ENCODE measurements at regions of chr1 and their contacts with region 1.

Region 1: DNA sequence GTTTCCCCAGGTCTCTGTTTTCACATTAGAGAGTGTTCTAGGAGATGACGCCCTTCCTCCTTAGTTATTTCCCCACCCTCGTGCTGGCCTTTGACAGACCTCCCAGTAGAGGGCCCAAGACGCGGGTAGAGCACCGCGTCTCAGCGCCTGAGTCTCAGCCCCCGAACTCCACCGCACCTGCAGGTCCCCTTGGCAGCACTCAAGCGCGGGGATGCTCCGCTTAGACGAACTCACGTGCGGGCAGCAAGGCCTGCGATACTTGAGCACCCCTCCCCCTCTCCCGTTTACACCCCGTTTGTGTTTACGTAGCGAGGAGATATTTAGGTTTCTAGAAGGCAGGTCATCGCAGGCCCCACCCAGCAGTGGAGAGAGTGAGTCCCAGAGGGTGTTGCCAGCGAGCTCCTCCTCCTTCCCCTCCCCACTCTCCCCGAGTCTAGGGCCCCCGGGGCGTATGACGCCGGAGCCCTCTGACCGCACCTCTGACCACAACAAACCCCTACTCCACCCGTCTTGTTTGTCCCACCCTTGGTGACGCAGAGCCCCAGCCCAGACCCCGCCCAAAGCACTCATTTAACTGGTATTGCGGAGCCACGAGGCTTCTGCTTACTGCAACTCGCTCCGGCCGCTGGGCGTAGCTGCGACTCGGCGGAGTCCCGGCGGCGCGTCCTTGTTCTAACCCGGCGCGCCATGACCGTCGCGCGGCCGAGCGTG is at the start of gene CD55:
- DNase-seq: peak; percentile 100
- H3K4me3 Mint-ChIP-seq: peak within 1 kb of the TSS; percentile 71
- H3K27ac Mint-ChIP-seq: peak within 1 kb of the TSS; percentile 93
- H3K4me1 Mint-ChIP-seq: peaks cover 41% of the 10 kb centered on the region
- H3K27me3 Mint-ChIP-seq: no peaks in the 10 kb centered on the region
- CTCF ChIP-seq: peak; percentile 22
- total RNA-seq, gene CD55: 159 and 213 TPM in 2 replicates

Region 2: DNA sequence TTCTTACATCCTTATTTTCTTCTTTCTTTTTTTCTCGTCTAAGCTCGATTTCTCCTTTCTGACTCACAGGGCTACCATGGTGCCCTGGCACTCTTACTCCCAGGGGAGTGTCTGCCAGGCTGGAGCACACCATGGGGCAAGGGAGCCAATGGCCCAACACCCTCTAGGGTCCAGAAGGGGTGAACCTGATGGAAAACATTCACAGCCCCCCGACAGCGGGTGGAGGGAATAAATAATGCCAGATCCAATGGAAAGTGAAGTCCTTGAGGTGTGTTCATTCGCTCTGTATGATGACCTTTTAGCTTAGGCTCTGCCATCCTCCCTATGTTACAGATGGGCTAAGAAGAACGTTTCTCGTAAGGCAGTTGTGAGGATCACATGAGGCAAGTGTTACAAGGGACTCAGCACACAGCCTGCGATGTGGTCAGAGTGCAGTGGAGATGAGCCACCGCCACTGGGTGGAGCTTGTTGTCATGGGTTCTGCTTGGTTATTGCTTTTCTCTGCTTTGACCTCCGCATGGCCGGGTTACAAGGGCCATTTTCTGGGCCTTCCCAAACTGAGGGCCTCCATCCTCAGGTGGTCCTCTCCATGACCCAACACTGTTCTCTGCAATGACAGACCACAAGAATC is 396.0 kb before region 1 on chr1:
- CTCF ChIA-PET with region 1: no interaction called
- POLR2A ChIA-PET with region 1: no interaction called
- intact Hi-C with region 1: no loop called
- DNase-seq: no peak
- H3K4me3 Mint-ChIP-seq: no peak overlapping the region
- H3K27ac Mint-ChIP-seq: no peak overlapping the region
- H3K4me1 Mint-ChIP-seq: no peaks in the 10 kb centered on the region
- H3K27me3 Mint-ChIP-seq: no peaks in the 10 kb centered on the region
- CTCF ChIP-seq: no peak

Region 3: DNA sequence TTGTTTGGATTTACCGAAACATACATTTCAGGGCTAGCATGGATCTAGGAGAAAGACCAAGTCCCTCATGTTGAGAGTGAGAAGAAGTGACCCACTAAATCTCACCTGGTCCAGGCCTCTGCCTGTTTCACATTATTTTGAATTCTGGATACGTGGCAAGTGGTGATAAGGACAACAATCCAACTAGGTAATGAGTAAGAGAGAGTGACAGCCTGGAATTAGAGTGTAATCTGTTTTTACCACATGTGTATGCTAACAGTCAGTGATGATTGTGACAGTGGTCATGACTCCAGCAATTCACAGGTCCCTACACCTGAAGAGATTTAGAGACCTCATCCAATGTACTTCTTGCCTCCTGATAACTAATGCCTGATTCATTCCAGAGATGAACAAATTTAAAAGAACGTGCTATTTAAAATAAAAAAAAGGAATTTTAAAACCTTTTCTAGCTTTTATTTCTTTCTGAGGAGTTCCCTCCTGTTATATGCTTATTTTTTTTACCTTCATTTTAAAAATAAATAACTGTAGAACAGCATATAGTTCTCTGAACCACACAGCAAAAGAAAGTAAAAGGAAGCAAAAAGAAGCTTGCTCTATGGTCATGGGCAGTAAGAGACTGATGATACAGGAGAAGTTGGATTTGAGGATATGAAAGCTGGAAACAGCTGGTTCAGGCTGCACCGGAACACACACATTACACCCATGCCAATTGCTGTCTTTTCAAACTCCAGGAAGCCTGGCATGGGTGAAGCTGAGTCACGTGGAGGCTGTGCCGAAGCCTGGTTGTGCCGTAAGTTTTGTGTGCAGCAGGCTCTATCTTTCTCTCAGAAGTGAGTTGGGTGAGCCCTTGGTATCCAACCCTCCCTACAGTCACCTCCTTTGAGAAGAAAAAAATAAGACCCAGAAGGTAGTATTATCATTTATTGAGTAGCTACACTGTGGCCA is 303.3 kb before region 1 on chr1:
- CTCF ChIA-PET with region 1: no interaction called
- POLR2A ChIA-PET with region 1: interaction called, 10 read pairs
- intact Hi-C with region 1: no loop called
- DNase-seq: peak; percentile 89
- H3K4me3 Mint-ChIP-seq: no peak overlapping the region
- H3K27ac Mint-ChIP-seq: peak overlapping the region; percentile 60
- H3K4me1 Mint-ChIP-seq: peaks cover 49% of the 10 kb centered on the region
- H3K27me3 Mint-ChIP-seq: no peaks in the 10 kb centered on the region
- CTCF ChIP-seq: no peak

Region 4: DNA sequence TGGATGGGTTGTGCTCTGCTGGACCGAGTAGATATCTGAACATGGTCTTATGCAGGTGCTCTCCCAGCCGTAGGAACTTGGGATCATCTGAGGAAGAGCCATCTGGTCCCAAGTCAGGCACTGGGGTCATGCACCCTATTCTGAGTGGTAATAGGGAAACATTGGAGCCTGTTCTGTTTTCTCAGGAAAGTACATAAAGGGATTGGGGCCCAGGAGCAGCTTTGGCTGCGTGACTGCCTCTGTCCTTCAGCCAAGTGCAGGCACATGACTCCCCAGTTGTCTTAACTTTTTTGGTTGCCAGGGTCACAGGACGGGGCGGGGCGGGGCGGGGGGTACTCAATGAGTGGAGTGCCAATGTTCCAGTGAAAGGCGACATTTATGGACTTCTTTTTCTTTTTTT is 256.7 kb before region 1 on chr1:
- CTCF ChIA-PET with region 1: no interaction called
- POLR2A ChIA-PET with region 1: no interaction called
- intact Hi-C with region 1: no loop called
- DNase-seq: no peak
- H3K4me3 Mint-ChIP-seq: no peak overlapping the region
- H3K27ac Mint-ChIP-seq: no peak overlapping the region
- H3K4me1 Mint-ChIP-seq: no peaks in the 10 kb centered on the region
- H3K27me3 Mint-ChIP-seq: no peaks in the 10 kb centered on the region
- CTCF ChIP-seq: no peak

Region 5: GRCh38 chr1:207077470-207078377 is 243.5 kb before region 1 on chr1:
- CTCF ChIA-PET with region 1: no interaction called
- POLR2A ChIA-PET with region 1: interaction called, 22 read pairs
- intact Hi-C with region 1: loop called (anchors 2 kb)
- DNase-seq: peak; percentile 96
- H3K4me3 Mint-ChIP-seq: no peak overlapping the region
- H3K27ac Mint-ChIP-seq: no peak overlapping the region
- H3K4me1 Mint-ChIP-seq: peaks cover 23% of the 10 kb centered on the region
- H3K27me3 Mint-ChIP-seq: peaks cover 7% of the 10 kb centered on the region
- CTCF ChIP-seq: peak; percentile 99

Region 6: DNA sequence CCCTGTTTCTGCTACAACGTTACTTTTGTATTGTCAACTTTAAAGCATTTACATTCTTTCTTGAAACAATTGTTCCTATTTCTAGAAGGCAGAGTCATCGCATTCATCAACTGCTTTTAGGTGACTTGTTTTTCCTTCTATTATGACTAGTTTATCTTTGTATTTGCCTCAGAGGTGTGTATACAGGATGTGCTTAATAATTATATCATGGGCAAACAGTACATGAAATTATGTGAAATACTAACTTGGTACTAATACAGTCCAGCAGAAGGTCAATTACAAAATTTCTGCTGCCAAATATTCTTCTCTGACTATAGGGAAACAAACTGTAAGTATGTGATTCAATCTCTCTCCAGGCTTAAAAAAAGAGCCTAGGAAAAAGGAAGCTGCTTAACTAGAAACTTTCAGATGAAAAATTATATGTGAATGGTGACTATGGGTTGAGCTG is 115.6 kb before region 1 on chr1:
- CTCF ChIA-PET with region 1: no interaction called
- POLR2A ChIA-PET with region 1: interaction called, 20 read pairs
- intact Hi-C with region 1: loop called (anchors 1 kb)
- DNase-seq: no peak
- H3K4me3 Mint-ChIP-seq: no peak overlapping the region
- H3K27ac Mint-ChIP-seq: peak overlapping the region; percentile 78
- H3K4me1 Mint-ChIP-seq: peaks cover 11% of the 10 kb centered on the region
- H3K27me3 Mint-ChIP-seq: no peaks in the 10 kb centered on the region
- CTCF ChIP-seq: no peak

Region 7: DNA sequence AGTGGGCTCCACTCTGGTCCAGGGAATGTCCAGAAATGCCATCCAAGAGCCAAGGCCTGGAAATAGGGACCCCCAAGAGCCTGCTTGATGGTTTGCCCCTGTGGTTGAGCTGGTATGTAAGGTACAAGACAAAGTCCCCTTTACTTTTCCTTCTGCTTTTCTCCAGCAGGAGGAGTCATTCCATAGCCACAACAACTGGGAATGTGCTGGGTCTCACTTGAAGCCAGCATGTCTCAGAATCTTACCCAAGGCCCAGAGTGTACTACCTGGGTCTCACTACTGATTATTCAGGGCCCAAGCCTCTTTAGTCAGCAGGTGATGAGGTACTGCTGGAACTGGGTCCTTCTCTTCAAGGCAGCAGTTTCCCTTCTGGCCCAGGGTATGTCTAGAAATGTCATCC is 61.8 kb before region 1 on chr1:
- CTCF ChIA-PET with region 1: interaction called, 3 read pairs
- POLR2A ChIA-PET with region 1: interaction called, 12 read pairs
- intact Hi-C with region 1: loop called (anchors 1 kb)
- DNase-seq: peak; percentile 77
- H3K4me3 Mint-ChIP-seq: no peak overlapping the region
- H3K27ac Mint-ChIP-seq: no peak overlapping the region
- H3K4me1 Mint-ChIP-seq: no peaks in the 10 kb centered on the region
- H3K27me3 Mint-ChIP-seq: no peaks in the 10 kb centered on the region
- CTCF ChIP-seq: peak; percentile 71

Region 8: GRCh38 chr1:207355060-207355459 is 33.8 kb after region 1 on chr1:
- CTCF ChIA-PET with region 1: interaction called, 3 read pairs
- POLR2A ChIA-PET with region 1: interaction called, 29 read pairs
- intact Hi-C with region 1: no loop called
- DNase-seq: no peak
- H3K4me3 Mint-ChIP-seq: no peak overlapping the region
- H3K27ac Mint-ChIP-seq: no peak overlapping the region
- H3K4me1 Mint-ChIP-seq: peaks cover 24% of the 10 kb centered on the region
- H3K27me3 Mint-ChIP-seq: no peaks in the 10 kb centered on the region
- CTCF ChIP-seq: no peak

Region 9: DNA sequence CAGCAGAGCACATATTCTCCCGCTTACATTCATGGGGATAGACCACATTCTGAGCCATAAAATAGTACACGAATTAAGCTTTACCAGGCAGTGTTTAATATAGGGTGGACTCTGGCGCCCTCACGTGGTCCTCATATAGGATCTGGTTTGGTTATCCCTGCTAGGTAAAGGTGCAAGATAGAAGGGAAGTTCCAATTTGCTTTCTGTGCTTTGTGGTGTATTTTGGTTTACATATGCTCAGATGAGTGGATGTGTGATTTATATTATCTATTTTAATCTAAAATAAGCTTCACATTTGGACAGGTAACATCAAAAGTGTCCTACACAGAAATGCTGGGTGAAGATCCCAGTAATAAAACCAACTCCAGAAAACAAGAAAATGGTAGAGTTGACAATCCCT is 178.3 kb after region 1 on chr1:
- CTCF ChIA-PET with region 1: interaction called, 8 read pairs
- POLR2A ChIA-PET with region 1: no interaction called
- intact Hi-C with region 1: loop called (anchors 5 kb)
- DNase-seq: peak; percentile 90
- H3K4me3 Mint-ChIP-seq: no peak overlapping the region
- H3K27ac Mint-ChIP-seq: no peak overlapping the region
- H3K4me1 Mint-ChIP-seq: peaks cover 6% of the 10 kb centered on the region
- H3K27me3 Mint-ChIP-seq: peaks cover 68% of the 10 kb centered on the region
- CTCF ChIP-seq: peak; percentile 97

Region 10: DNA sequence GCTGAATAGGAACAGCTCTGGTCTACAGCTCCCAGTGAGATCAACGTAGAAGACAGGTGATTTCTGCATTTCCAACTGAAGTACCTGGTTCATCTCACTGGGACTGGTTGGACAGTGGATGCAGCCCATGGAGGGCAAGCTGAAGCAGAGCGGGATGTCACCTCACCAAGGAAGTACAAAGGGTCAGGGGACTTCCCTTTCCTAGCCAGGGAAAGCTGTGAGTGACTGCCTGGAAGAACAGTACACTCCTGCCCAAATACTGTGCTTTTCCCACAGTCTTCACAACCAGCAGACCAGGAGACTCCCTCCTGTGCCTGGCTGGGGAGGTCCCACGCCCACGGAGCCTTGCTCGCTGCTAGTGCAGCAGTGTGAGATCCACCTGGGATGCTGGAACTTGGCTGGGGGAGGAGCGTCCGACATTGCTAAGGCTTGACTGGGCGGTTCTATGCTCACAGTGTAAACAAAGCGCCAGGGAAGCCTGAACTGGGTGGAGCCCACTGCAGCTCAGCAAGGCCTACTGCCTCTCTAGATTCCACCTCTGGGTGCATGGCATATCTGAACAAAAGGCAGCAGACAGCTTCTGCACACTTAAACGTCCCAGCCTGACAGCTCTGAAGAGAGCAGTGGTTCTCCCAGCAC is 338.4 kb after region 1 on chr1:
- CTCF ChIA-PET with region 1: no interaction called
- POLR2A ChIA-PET with region 1: no interaction called
- intact Hi-C with region 1: no loop called
- DNase-seq: peak; percentile 64
- H3K4me3 Mint-ChIP-seq: no peak overlapping the region
- H3K27ac Mint-ChIP-seq: no peak overlapping the region
- H3K4me1 Mint-ChIP-seq: no peaks in the 10 kb centered on the region
- H3K27me3 Mint-ChIP-seq: peaks cover 29% of the 10 kb centered on the region
- CTCF ChIP-seq: no peak